ENCODE measurements at regions of chr12 and their contacts with region 1.

Region 1: GRCh38 chr12:4276524-4277204 is 3.1 kb downstream of the CCND2 start:
- DNase-seq: peak; percentile 85
- CTCF ChIP-seq: peak; percentile 85

Region 2: GRCh38 chr12:3576891-3577290 is 699.8 kb before region 1 on chr12:
- in situ Hi-C with region 1: no loop called
- DNase-seq: no peak
- CTCF ChIP-seq: no peak

Region 3: DNA sequence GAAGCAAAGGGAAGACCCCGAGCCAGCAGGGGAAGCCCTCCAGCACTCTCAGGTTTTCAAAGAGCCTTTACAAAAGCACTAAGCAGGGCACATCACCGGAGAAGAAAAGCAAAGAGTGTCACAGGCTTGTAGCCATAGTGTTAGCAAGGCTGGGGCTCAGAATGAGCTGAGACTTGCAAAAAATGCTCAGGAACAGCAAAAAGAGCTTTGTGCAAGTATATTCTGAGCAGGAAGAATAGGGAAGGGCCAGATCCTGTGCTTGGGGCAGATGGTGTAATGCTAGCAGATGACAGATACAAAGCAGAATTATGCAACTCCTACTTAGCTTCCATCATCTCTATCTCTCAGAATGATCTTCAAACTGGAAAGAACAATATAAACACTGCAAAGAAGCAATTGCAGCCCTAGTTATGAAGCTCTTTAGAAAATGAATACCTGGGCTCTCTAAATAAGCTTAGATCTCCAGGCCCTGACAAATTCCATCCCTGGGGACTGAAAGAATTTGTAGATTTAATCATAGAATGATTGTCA is 379.8 kb before region 1 on chr12:
- in situ Hi-C with region 1: loop called (anchors 10 kb)
- DNase-seq: no peak
- CTCF ChIP-seq: no peak

Region 4: GRCh38 chr12:3988519-3989448 is 287.9 kb before region 1 on chr12:
- in situ Hi-C with region 1: loop called (anchors 10 kb)
- DNase-seq: peak; percentile 51
- CTCF ChIP-seq: no peak

Region 5: DNA sequence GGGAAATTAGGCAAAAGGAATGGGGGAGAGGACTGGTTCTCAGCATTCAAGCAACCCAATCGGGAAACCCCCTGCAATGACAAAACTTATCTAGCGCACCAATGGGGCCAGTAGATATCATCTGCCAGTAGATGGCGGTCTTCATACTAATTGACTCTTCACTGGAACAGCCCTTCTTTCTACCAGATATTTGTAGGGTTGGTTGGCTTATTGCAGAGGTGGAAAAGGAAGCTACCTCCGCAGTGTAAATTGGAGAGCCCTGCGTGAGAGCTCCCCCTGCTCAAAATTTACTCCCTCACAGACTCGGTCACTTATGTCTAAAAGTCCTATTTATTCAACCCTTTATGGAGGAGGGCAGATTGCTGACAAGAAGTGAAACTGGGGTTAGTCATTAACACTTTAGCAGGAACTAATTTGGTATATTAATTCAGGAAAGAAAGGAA is 169.2 kb before region 1 on chr12:
- in situ Hi-C with region 1: loop called (anchors 10 kb)
- DNase-seq: peak; percentile 81
- CTCF ChIP-seq: peak; percentile 56

Measured in GM13977 (cell line).